ENCODE measurements at regions of chr7 and their contacts with region 1.

Region 1: GRCh38 chr7:151570366-151570915 is 50.7 kb upstream of the RHEB start:
- DNase-seq: no peak
- H3K4me3 ChIP-seq: no peak overlapping the region
- CTCF ChIP-seq: peak; percentile 18

Region 2: DNA sequence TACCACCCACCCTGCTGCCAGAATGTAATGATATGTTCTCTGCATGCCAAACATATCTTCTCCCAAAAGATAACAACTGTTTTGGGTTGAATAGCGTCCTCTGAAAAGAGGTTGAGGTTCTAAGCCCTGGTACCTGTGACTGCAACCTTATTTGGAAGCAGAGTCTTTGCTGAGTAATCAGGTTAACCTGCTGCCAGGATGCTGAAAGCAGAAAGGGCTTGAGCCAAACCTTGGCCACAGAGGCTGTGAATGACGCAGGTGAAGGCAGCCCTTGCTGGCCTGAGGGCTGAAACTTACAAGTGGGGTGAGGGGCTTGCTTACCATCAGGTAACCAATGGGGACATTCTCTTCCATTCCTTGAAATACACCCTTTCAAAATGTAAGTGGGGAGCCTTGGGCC is 101.1 kb after region 1 on chr7:
- CTCF ChIA-PET with region 1: no interaction called
- POLR2A ChIA-PET with region 1: no interaction called
- DNase-seq: no peak
- H3K4me3 ChIP-seq: no peak overlapping the region
- CTCF ChIP-seq: no peak

Region 3: GRCh38 chr7:151705636-151706276 is 135.3 kb after region 1 on chr7:
- CTCF ChIA-PET with region 1: interaction called, 19 read pairs
- POLR2A ChIA-PET with region 1: no interaction called
- DNase-seq: no peak
- H3K4me3 ChIP-seq: no peak overlapping the region
- CTCF ChIP-seq: peak; percentile 67

Region 4: DNA sequence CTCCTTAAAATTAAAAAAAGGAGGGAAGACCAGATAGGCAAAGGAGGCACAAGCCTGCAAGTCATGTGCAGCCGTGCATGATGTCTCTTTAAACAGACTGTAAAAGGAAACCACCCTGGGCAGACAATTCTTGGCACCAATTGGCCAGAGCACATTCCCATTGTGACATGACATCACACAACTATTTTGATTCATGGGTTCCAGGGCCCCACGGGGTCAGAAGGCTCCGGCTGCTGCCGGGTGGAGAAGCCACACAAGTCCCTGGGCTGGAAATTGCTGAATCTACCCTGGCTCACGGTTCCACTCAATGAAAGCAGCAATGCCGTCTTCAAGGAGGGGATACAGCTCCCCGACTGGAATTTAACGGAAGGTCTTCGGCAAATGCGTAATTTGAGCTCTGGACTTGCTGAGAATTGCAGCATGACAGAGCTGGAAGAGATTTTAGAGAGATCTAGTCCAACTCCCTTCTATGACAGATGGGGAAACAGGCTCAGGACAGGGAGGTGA is 166.0 kb after region 1 on chr7:
- CTCF ChIA-PET with region 1: interaction called, 27 read pairs
- POLR2A ChIA-PET with region 1: no interaction called
- DNase-seq: peak; percentile 87
- H3K4me3 ChIP-seq: peak overlapping the region; percentile 55
- CTCF ChIP-seq: peak; percentile 54

Region 5: DNA sequence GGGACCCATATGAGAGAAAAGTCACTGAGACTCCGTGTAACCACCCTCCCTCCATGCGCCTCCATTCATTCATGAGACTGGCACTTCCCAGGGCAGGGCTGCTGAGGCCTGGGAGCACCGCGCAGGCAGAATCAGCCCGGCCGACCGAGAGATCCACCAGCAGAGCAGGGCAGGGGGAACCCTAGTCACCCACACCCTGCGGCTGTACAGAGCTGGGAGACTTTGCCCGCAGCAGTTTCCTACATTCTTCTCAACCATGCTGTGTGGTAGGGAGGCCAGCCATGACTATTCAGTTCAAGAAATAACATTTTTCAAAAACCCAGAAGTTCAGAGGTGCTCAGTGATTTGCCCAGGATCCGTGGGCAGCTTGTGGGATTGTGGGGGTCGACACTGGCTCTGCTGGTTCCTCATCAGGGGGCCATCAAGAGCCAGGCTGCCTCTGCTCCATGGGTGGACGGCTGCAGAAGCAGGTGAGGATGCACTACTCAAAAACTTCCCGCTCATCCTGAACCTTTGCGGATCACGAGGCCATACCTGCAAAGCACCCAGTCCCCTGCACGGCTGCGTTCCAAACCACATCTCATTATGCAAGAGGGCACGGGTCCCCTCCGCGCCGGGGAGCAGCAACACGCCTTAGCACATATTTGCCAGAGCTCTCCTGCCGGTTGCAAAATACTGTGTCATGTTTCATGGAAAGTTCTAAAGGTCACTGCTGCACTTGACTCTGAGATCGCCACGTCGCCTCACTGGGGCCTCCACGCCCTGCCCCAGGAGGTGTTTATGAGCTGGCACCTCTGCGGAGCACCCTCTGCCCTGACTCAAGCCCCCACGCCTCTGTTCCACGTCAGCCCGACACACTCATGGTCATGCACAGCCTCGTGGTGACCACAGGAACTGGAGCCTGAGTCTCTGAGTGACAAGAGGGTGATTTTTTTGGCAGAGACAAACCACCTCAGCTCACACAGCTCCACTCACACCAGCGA is 174.5 kb after region 1 on chr7:
- CTCF ChIA-PET with region 1: interaction called, 10 read pairs
- POLR2A ChIA-PET with region 1: no interaction called
- DNase-seq: no peak
- H3K4me3 ChIP-seq: no peak overlapping the region
- CTCF ChIP-seq: peak; percentile 61

Region 6: GRCh38 chr7:151782598-151783448 is 212.4 kb after region 1 on chr7:
- CTCF ChIA-PET with region 1: interaction called, 14 read pairs
- POLR2A ChIA-PET with region 1: no interaction called
- DNase-seq: no peak
- H3K4me3 ChIP-seq: peak overlapping the region; percentile 42
- CTCF ChIP-seq: peak; percentile 90